Activated naive CD4-positive, alpha-beta T cell treated with anti-CD3 and anti-CD28 coated beads, Interleukin-2, amount 10 ng/mL, durations not matched to agents 7 days and 5 days (primary cell): ENCODE measurements at regions of chr17 and their contacts with region 1.

Region 1: DNA sequence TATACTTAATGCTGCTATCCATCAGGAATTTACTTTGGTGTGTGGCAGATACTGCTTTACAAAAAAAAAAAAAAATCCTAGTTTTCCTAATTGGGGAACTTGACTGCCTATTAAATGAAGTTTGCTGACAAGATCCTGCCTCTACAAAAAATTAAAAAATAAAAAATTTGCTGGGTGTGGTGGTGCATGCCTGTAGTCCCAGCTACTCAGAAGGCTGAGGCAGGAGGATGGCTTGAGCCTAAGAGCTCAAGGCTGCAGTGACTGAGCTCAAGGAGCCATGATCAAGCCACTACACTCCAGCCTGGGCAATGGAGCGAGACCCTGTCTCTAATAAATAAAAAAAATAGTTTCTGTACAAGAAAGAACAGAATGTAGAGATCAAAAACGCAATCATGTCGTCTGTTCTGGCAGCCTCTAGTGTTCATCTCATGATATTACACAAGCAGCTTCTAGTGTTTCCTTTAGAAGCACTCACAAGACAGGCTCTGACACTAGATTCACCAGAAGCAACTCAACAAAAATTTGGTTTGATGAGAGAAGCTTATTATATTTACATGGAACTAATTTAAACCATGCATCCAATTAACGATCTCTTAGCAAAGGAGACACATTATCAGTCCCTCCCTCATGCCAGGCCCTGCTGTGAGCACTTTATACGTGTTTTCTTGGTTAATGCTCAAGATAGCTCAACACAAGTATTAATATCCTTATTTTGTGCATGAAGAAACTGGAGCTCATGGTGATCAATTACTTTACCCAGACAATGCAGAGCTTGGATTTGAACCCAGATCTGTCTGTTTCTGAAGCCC is 6.8 kb upstream of the KRTAP17-1 start:
- DNase-seq: no peak
- H3K4me3 Mint-ChIP-seq: no peak overlapping the region
- H3K27ac Mint-ChIP-seq: peak overlapping the region; percentile 50
- H3K4me1 Mint-ChIP-seq: peaks cover 29% of the 10 kb centered on the region
- H3K27me3 Mint-ChIP-seq: no peaks in the 10 kb centered on the region

Region 2: DNA sequence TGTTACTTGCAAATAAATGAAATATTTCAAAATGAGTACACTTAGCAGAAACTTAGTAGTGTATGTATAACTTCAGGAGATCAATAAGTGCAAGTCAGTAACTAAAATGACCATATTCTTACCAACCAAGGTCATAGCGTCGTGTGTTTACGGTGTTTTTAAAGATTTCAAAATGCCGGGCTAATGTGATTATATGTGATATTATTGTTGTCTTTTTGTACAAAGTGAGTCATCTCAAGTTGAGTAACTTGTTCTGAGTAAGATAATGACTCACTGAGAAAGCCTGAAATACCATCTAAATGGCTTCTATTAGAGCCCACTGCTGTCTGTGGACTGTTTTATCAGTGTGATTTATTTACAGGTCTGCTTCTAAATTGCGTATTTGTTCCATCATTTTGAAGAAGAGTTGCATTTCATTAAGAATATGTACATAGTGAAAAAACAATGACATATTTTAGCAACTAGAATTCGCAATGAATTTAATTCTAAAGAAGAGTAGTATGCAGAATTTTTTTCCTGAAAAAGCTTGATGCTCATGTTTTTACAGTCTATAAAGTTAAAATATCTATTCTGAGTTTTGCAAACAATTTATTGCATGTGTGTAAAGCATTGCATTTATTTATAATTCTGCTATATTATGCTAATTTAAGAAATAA is 468.0 kb before region 1 on chr17:
- CTCF ChIA-PET with region 1: interaction called, 13 read pairs
- DNase-seq: no peak
- H3K4me3 Mint-ChIP-seq: no peak overlapping the region
- H3K27ac Mint-ChIP-seq: no peak overlapping the region
- H3K4me1 Mint-ChIP-seq: peaks cover 2% of the 10 kb centered on the region
- H3K27me3 Mint-ChIP-seq: peaks cover 4% of the 10 kb centered on the region

Region 3: GRCh38 chr17:41392278-41392677 is 70.0 kb after region 1 on chr17:
- CTCF ChIA-PET with region 1: no interaction called
- DNase-seq: no peak
- H3K4me3 Mint-ChIP-seq: no peak overlapping the region
- H3K27ac Mint-ChIP-seq: no peak overlapping the region
- H3K4me1 Mint-ChIP-seq: no peaks in the 10 kb centered on the region
- H3K27me3 Mint-ChIP-seq: peaks cover 17% of the 10 kb centered on the region